B cell (primary cell): ENCODE measurements at regions of chr17 and their contacts with region 1.

Region 1: DNA sequence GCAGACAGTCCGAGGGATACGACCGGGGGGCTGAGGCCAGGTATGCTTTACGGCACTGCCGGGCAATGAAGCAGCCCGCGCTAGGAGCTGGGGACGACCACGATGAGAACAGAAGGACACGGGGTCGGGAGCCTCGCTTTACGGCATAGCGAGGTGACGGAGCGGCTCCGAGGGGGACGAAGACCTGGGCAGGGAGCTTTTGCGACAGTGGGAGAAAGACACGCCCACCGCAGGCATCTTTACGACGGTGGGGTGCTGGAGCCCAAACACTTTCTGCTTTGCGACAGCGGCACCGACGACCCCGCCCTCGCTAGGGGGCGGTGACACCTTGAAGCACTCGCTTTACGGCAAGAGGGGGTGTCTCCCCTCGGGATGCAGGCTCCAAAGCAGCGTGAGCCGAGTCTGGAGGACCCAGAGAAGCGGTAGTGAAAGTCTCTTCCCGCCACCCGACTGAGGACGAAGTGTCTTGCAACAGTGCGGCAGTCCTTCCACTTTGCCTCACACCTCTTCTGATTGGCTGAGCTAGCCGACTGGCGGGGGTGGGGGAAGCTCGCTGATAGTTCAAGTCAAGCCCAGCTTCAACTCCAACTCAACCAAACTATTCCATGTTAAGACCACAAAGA is 350 bp upstream of the NEURL4 start:
- DNase-seq: peak; percentile 100
- ATAC-seq: peak; percentile 71
- H3K4me3 ChIP-seq: peak overlapping the region; percentile 65 to 92 (median 81)
- H3K4me3 Mint-ChIP-seq: peak overlapping the region; percentile 96
- H3K27ac ChIP-seq: peak overlapping the region; percentile 86 to 93
- H3K27ac Mint-ChIP-seq: peak overlapping the region; percentile 98
- H3K4me1 ChIP-seq: peaks cover 23 to 46% of the 10 kb centered on the region in 2 donors
- H3K4me1 Mint-ChIP-seq: peaks cover 40% of the 10 kb centered on the region
- H3K27me3 ChIP-seq: no peaks in the 10 kb centered on the region
- H3K27me3 Mint-ChIP-seq: no peaks in the 10 kb centered on the region
- CTCF ChIP-seq: no peak

Region 2: DNA sequence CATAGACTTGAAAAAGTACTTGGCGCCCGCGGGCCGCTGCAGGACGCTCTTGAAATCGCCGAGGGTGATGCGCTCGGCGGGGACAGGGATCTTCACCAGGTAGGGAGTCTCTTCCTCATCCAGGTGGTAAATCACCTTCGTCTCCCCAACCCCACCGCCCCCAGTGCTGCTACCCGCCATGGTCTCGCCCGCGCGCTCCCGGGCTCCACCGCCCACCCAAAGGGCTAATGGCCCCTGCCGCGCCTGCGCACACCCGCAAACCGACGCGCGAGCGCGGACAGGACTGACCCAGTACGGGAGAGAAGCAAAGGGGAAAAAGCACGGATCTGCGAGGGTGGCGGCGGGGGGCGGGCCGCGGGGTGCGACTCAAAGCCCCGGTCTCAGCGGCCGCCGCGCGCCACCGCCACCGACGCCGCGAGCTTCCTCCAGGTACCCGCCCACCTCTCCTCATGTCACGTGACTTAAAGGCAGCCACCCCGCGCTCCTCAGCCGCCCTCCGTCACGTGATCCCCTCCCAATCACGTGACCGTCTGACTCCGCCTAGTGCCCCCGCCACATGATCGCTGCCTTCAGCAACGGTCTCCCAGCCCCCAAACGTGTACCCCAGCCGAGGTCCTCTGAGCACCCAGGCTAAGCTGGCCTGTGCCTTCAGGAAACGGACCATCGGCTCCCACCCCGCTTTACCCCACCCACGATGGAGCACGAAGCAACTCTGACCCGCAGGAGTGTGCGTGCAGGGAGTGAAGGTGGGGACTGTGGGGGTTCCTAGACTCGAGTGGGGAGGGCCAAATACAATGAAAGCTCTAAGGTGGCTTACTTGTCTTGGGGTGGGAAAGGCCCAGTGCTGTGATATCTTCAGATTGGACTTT is 95.2 kb before region 1 on chr17 and contains the start of gene DVL2:
- CTCF ChIA-PET with region 1: no interaction called
- POLR2A ChIA-PET with region 1: no interaction called
- intact Hi-C with region 1: loop called (anchors 1 kb)
- DNase-seq: peak; percentile 97
- ATAC-seq: peak; percentile 50
- H3K4me3 ChIP-seq: peak within 1 kb of the TSS; percentile 80 to 96 (median 92)
- H3K4me3 Mint-ChIP-seq: peak within 1 kb of the TSS; percentile 97
- H3K27ac ChIP-seq: peak within 1 kb of the TSS; percentile 68 to 88
- H3K27ac Mint-ChIP-seq: peak within 1 kb of the TSS; percentile 99
- H3K4me1 ChIP-seq: peaks cover 31 to 42% of the 10 kb centered on the region in 2 donors
- H3K4me1 Mint-ChIP-seq: peaks cover 44% of the 10 kb centered on the region
- H3K27me3 ChIP-seq: no peaks in the 10 kb centered on the region
- H3K27me3 Mint-ChIP-seq: no peaks in the 10 kb centered on the region
- CTCF ChIP-seq: no peak
- total RNA-seq, gene DVL2: 104 and 116 TPM in 2 replicates

Region 3: GRCh38 chr17:7252176-7253043 is 77.1 kb before region 1 on chr17 and contains the start of gene ELP5:
- CTCF ChIA-PET with region 1: no interaction called
- POLR2A ChIA-PET with region 1: interaction called, 3 read pairs
- intact Hi-C with region 1: loop called (anchors 1 kb)
- DNase-seq: peak; percentile 100
- ATAC-seq: peak; percentile 64
- H3K4me3 ChIP-seq: peak within 1 kb of the TSS; percentile 69 to 90 (median 78)
- H3K4me3 Mint-ChIP-seq: peak within 1 kb of the TSS; percentile 98
- H3K27ac ChIP-seq: peak within 1 kb of the TSS; percentile 98 to 100
- H3K27ac Mint-ChIP-seq: peak within 1 kb of the TSS; percentile 100
- H3K4me1 ChIP-seq: peaks cover 30 to 33% of the 10 kb centered on the region in 2 donors
- H3K4me1 Mint-ChIP-seq: peaks cover 44% of the 10 kb centered on the region
- H3K27me3 ChIP-seq: no peaks in the 10 kb centered on the region
- H3K27me3 Mint-ChIP-seq: no peaks in the 10 kb centered on the region
- CTCF ChIP-seq: no peak
- total RNA-seq, gene ELP5: 42.2 and 48.0 TPM in 2 replicates

Region 4: DNA sequence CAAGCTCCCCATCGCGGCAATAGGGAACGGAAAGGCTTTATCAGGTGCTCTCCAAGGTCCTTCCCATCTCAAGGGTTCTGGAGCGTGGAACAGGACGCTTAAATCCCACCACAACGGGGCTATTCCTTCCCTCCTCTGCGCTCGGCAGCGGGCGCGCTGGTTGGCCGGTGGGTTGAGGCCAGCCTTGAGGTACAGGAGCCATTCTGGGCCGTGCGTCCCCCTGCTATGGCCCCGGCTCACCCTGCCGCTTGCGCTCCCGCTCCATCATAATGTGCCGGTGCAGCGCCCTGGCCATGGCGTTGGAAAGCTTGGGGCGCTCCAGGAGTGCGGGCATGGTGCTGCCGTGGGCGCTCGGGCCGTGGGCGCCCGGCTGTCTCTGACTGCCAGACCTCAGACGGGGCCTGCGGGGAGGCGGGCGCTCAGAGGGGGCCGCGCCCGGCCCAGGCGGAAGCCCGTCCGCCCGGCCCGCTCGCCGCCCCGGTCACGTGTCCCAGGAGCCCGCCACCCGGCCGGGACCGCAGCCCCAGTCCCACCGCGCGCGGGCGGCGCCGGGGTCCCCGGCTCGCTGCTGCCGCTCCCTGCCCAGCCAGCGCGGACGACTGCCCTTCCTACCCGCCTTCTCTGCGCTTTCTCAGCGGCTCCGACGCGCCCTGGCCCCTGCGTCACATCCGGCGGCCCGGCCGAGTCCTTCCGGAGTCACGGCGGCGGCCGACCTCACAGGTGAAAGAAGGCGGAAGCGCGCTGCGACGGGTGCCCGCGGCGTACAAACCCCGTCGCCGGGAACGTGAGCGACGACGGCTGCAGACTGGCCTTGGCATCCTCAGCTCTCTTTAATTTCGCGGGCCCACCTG is 14.5 kb before region 1 on chr17 and contains the start of gene GPS2:
- CTCF ChIA-PET with region 1: interaction called, 9 read pairs
- POLR2A ChIA-PET with region 1: interaction called, 12 read pairs
- intact Hi-C with region 1: loop called (anchors 1 kb)
- DNase-seq: peak; percentile 95
- ATAC-seq: peak; percentile 82
- H3K4me3 ChIP-seq: peak within 1 kb of the TSS; percentile 73 to 90 (median 82)
- H3K4me3 Mint-ChIP-seq: peak within 1 kb of the TSS; percentile 97
- H3K27ac ChIP-seq: peak within 1 kb of the TSS; percentile 78 to 91
- H3K27ac Mint-ChIP-seq: peak within 1 kb of the TSS; percentile 99
- H3K4me1 ChIP-seq: peaks cover 25 to 47% of the 10 kb centered on the region in 2 donors
- H3K4me1 Mint-ChIP-seq: peaks cover 55% of the 10 kb centered on the region
- H3K27me3 ChIP-seq: no peaks in the 10 kb centered on the region
- H3K27me3 Mint-ChIP-seq: no peaks in the 10 kb centered on the region
- CTCF ChIP-seq: no peak
- total RNA-seq, gene GPS2: 128 and 137 TPM in 2 replicates

Region 5: DNA sequence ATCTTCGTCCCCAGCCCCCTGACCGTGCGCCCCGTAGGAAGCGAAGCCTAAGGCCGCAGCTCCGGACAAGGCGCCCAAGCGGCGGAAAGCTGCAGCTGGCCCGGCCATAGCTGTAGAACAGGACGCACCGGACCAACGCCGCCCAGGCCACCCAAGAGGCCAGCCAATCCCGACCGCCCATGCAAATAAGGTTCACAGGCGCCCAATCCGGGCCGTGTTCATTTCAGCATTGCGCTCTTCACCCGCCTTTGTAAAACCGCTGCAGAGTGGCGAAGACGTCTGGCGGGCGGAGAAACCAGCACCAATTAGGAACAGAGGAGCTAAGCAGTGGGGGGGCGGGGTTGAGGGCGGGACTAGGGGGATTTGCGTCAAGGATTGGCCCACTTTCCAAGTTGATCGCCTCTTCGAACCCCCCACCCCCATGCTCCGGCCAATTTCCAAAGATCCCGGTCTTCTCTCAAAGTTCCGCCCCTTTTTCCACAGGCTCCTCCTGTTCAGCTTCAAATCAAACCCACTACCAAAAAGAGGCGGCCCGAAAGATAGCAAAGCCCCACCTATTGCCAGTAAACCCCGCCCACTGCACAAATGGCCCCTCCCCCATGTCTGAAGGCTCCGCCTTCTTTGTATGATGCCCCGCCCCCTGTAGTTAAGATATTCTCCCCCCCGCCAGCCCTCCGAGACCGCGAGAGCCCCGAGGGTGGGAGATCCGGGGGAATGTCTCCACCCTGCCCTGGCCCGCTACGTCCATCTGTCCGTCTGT is 74.7 kb after region 1 on chr17 and contains the start of gene TMEM256:
- CTCF ChIA-PET with region 1: interaction called, 3 read pairs
- POLR2A ChIA-PET with region 1: no interaction called
- intact Hi-C with region 1: loop called (anchors 1 kb)
- DNase-seq: peak; percentile 98
- ATAC-seq: peak; percentile 87
- H3K4me3 ChIP-seq: peak within 1 kb of the TSS; percentile 57 to 95 (median 82)
- H3K4me3 Mint-ChIP-seq: peak within 1 kb of the TSS; percentile 98
- H3K27ac ChIP-seq: peak within 1 kb of the TSS; percentile 45 to 59
- H3K27ac Mint-ChIP-seq: peak within 1 kb of the TSS; percentile 94
- H3K4me1 ChIP-seq: peaks cover 17 to 20% of the 10 kb centered on the region in 2 donors
- H3K4me1 Mint-ChIP-seq: peaks cover 22% of the 10 kb centered on the region
- H3K27me3 ChIP-seq: peaks cover 0 to 27% (median 4%) of the 10 kb centered on the region in 4 experiments
- H3K27me3 Mint-ChIP-seq: peaks cover 17% of the 10 kb centered on the region
- CTCF ChIP-seq: no peak
- total RNA-seq, gene TMEM256: 64.5 and 67.8 TPM in 2 replicates